ENCODE measurements at regions of chr2 and their contacts with region 1.

Region 1: DNA sequence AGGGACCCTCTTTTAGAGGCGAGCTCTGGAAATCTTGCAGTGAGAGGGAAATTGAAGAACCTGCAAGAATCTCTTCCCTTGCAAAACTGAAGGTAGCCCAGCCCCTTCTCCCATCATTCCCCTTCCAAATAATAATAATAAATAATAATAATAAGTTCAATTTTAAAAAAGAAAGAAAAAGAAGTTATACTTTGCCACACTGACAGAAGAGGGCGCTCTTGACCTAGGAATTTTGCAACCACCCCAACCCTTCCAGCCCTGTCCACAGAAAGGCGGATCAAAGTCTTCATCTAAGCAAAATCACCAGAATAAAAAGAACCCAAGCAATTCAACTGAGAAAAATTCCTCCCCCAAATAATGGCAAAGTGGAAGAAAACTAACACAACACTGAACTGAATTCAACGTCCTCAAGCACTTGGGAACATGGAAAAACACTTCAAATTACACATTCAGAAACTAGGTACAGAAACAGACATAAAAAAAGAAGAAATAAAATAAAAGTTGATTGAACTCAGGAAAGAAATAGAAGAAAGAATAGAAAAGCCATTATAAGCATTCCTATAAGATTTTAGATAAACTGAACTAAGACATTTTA is 98.9 kb upstream of the GLS start:
- DNase-seq: peak; percentile 76
- ATAC-seq: peak; percentile 83
- H3K4me3 ChIP-seq: no peak overlapping the region
- H3K27ac ChIP-seq: no peak overlapping the region
- H3K4me1 ChIP-seq: 0 out of 2 replicates have a peak, but pooled peaks cover 2% of the 10 kb centered on the region
- H3K27me3 ChIP-seq: peaks cover 6% of the 10 kb centered on the region; the same call in 1 of the 2 replicates
- CTCF ChIP-seq: peak; percentile 76
- POLR2A ChIP-seq: no peak
- RAD21 ChIP-seq: peak; percentile 92

Region 2: DNA sequence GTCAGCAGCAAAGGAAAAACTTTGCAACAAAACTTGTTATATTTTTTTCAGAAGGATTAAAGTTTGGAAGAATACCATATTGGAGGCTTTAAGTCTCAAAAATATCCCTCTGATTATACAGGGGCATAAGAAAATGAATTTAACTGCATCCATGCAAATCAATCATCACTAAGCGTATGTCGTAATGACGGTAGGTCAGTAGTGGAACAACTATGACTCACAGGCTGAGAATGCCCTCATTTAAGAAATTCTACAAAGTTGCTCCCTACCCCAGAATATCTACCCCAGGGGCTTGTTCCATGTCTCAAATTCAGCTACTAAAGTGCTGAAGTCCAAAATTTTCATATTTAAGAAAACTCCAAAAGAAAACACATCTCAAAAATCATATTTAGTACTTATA is 145.3 kb before region 1 on chr2:
- CTCF ChIA-PET with region 1: no interaction called
- POLR2A ChIA-PET with region 1: no interaction called
- dilution Hi-C with region 1: no loop called
- in situ Hi-C with region 1: no loop called
- intact Hi-C with region 1: no loop called
- DNase-seq: peak; percentile 75
- ATAC-seq: no peak
- H3K4me3 ChIP-seq: no peak overlapping the region
- H3K27ac ChIP-seq: no peak overlapping the region
- H3K4me1 ChIP-seq: peaks cover 7% of the 10 kb centered on the region
- H3K27me3 ChIP-seq: no peaks in the 10 kb centered on the region
- CTCF ChIP-seq: no peak
- POLR2A ChIP-seq: no peak
- RAD21 ChIP-seq: no peak

Region 3: DNA sequence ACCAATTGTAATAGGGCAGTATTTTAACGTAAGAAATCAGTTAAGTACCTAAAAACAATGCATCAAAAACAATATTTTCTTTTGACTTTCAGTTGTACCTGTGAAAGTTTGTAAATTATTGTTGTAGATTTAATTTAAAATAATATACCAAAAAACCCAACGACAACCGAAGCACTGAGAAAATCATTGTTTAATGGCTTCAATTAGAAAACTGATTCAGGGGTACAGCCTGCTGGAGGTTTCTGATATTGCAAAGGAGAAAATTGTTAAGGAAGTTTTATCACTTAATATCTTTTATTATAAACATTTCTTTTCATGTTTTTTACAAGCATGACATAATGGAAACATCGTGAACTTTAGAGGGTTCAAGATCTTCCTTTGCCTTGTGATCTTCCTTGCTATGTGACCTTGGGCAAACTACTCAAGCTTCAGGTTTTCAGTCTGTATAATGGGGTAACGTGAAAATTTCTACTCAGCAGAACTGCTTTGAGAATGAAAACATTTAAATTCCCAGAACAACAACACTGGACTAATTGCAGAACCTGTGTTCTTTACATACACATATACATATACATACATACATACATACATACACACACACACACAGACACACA is 22.6 kb after region 1 on chr2:
- CTCF ChIA-PET with region 1: no interaction called
- POLR2A ChIA-PET with region 1: no interaction called
- dilution Hi-C with region 1: no loop called
- in situ Hi-C with region 1: no loop called
- intact Hi-C with region 1: loop called (anchors 1 kb)
- DNase-seq: peak; percentile 49
- ATAC-seq: peak; percentile 76
- H3K4me3 ChIP-seq: no peak overlapping the region
- H3K27ac ChIP-seq: no peak overlapping the region
- H3K4me1 ChIP-seq: no peaks in the 10 kb centered on the region; the same call in 1 of the 2 replicates
- H3K27me3 ChIP-seq: no peaks in the 10 kb centered on the region
- CTCF ChIP-seq: peak; percentile 75
- POLR2A ChIP-seq: no peak
- RAD21 ChIP-seq: peak; percentile 78

Region 4: GRCh38 chr2:190947711-190948251 is 166.1 kb after region 1 on chr2:
- CTCF ChIA-PET with region 1: no interaction called
- POLR2A ChIA-PET with region 1: no interaction called
- dilution Hi-C with region 1: no loop called
- in situ Hi-C with region 1: loop called (anchors 10 kb)
- intact Hi-C with region 1: loop called (anchors 5 kb)
- DNase-seq: peak; percentile 81
- ATAC-seq: peak; percentile 75
- H3K4me3 ChIP-seq: no peak overlapping the region
- H3K27ac ChIP-seq: no peak overlapping the region
- H3K4me1 ChIP-seq: peaks cover 4% of the 10 kb centered on the region
- H3K27me3 ChIP-seq: no peaks in the 10 kb centered on the region
- CTCF ChIP-seq: peak; percentile 39
- POLR2A ChIP-seq: peak; percentile 16; the same call in 1 of the 2 replicates
- RAD21 ChIP-seq: peak; percentile 37

Region 5: GRCh38 chr2:190979906-190980629 is 198.4 kb after region 1 on chr2:
- CTCF ChIA-PET with region 1: interaction called, 3 read pairs
- POLR2A ChIA-PET with region 1: no interaction called
- dilution Hi-C with region 1: no loop called
- in situ Hi-C with region 1: no loop called
- intact Hi-C with region 1: loop called (anchors 1 kb)
- DNase-seq: peak; percentile 96
- ATAC-seq: peak; percentile 87
- H3K4me3 ChIP-seq: no peak overlapping the region
- H3K27ac ChIP-seq: peak overlapping the region; percentile 0; the same call in 1 of the 2 replicates
- H3K4me1 ChIP-seq: peaks cover 5% of the 10 kb centered on the region
- H3K27me3 ChIP-seq: no peaks in the 10 kb centered on the region
- CTCF ChIP-seq: no peak
- POLR2A ChIP-seq: no peak
- RAD21 ChIP-seq: 0 out of 2 replicates have a peak, but pooled peaks have one; percentile 15

Region 6: GRCh38 chr2:191128172-191128910 is 346.6 kb after region 1 on chr2:
- CTCF ChIA-PET with region 1: no interaction called
- POLR2A ChIA-PET with region 1: no interaction called
- dilution Hi-C with region 1: no loop called
- in situ Hi-C with region 1: loop called (anchors 25 kb)
- intact Hi-C with region 1: no loop called
- DNase-seq: no peak
- ATAC-seq: no peak
- H3K4me3 ChIP-seq: no peak overlapping the region
- H3K27ac ChIP-seq: no peak overlapping the region
- H3K4me1 ChIP-seq: no peaks in the 10 kb centered on the region
- H3K27me3 ChIP-seq: no peaks in the 10 kb centered on the region; the same call in 1 of the 2 replicates
- CTCF ChIP-seq: no peak
- POLR2A ChIP-seq: no peak
- RAD21 ChIP-seq: no peak